ENCODE measurements at regions of chr1 and their contacts with region 1.

Region 1: GRCh38 chr1:1615256-1616044 is at the start of gene MIB2:
- DNase-seq: peak; percentile 98 to 99 (median 99)
- H3K4me3 ChIP-seq: peak within 1 kb of the TSS; percentile 73 to 89
- H3K4me3 Mint-ChIP-seq: peak within 1 kb of the TSS; percentile 89 to 97 (median 94)
- H3K27ac ChIP-seq: peak within 1 kb of the TSS; percentile 100
- H3K27ac Mint-ChIP-seq: peak within 1 kb of the TSS; percentile 98 to 100 (median 99)
- H3K4me1 ChIP-seq: peaks cover 29% of the 10 kb centered on the region
- H3K4me1 Mint-ChIP-seq: peaks cover 10 to 38% (median 26%) of the 10 kb centered on the region in 4 donors
- H3K27me3 ChIP-seq: no peaks in the 10 kb centered on the region
- H3K27me3 Mint-ChIP-seq: no peaks in the 10 kb centered on the region
- total RNA-seq, gene MIB2: 112 to 114 TPM

Region 2: DNA sequence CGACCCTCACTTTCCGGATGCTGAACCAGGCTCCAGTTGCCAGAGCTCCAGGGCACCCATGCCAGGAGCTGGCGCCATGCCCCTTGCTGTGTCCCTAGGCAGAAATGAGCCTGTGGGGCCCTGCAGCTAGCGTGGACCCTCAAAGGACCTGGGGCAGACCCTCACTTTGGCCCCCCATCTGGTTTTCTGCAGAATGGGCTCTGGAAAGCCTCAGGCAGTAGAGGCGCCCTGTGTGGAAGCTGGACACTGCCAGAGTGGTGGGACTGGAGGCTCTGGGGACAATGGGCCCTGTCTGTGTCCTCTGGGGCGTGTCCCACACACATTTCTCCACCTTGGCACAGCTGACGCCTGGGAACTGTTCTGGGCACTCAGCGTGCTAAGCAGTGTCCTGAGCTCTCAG is 234.2 kb before region 1 on chr1:
- CTCF ChIA-PET with region 1: no interaction called
- POLR2A ChIA-PET with region 1: no interaction called
- intact Hi-C with region 1: no loop called
- DNase-seq: no peak
- H3K4me3 ChIP-seq: no peak overlapping the region
- H3K4me3 Mint-ChIP-seq: no peak overlapping the region
- H3K27ac ChIP-seq: no peak overlapping the region
- H3K27ac Mint-ChIP-seq: no peak overlapping the region
- H3K4me1 ChIP-seq: peaks cover under 1% of the 10 kb centered on the region
- H3K4me1 Mint-ChIP-seq: peaks cover 0 to under 1% (median 0%) of the 10 kb centered on the region in 4 donors
- H3K27me3 ChIP-seq: no peaks in the 10 kb centered on the region
- H3K27me3 Mint-ChIP-seq: no peaks in the 10 kb centered on the region

Region 3: DNA sequence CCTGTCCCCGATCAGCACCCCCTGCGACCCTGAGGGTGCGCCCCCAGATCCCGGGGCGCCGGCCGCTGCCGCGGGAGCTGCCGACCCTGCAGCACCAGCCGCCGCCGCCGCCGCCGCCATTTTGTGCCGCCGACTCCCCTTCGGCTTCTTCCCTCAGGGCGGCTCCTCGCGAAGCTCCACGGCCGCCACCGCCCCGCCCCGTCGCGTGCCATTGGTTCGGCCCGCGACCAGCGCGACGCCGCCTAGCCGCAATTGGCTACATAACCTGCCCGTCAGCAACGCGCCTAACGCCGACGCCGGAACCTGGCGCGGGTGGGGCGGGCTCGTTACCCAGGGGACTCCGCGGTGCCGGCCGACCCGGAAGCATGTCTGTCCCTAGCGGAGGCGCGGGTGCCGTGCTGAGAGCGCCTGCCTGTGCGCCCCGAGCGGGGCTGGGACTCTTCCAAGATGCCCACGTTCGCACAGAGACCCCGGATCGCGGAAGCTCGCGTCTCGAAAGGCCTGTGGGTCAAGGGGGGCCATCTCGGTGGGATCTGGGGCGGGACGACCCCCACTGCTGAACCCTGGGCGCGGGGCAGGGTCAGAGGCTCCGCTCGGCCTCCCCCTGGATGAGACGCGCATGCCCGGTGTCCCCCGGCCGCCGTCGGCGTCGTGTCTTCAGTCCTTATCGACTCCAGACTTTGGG is 216.1 kb before region 1 on chr1 and contains the start of gene CCNL2:
- CTCF ChIA-PET with region 1: no interaction called
- POLR2A ChIA-PET with region 1: interaction called, 14 read pairs
- intact Hi-C with region 1: no loop called
- DNase-seq: peak; percentile 98 to 99 (median 99)
- H3K4me3 ChIP-seq: peak within 1 kb of the TSS; percentile 92
- H3K4me3 Mint-ChIP-seq: peak within 1 kb of the TSS; percentile 89 to 94 (median 92)
- H3K27ac ChIP-seq: peak within 1 kb of the TSS; percentile 85
- H3K27ac Mint-ChIP-seq: peak within 1 kb of the TSS; percentile 89 to 96 (median 94)
- H3K4me1 ChIP-seq: peaks cover 36% of the 10 kb centered on the region
- H3K4me1 Mint-ChIP-seq: peaks cover 17 to 63% (median 41%) of the 10 kb centered on the region in 4 donors
- H3K27me3 ChIP-seq: no peaks in the 10 kb centered on the region
- H3K27me3 Mint-ChIP-seq: no peaks in the 10 kb centered on the region
- total RNA-seq, gene CCNL2: 388 to 394 TPM

Region 4: DNA sequence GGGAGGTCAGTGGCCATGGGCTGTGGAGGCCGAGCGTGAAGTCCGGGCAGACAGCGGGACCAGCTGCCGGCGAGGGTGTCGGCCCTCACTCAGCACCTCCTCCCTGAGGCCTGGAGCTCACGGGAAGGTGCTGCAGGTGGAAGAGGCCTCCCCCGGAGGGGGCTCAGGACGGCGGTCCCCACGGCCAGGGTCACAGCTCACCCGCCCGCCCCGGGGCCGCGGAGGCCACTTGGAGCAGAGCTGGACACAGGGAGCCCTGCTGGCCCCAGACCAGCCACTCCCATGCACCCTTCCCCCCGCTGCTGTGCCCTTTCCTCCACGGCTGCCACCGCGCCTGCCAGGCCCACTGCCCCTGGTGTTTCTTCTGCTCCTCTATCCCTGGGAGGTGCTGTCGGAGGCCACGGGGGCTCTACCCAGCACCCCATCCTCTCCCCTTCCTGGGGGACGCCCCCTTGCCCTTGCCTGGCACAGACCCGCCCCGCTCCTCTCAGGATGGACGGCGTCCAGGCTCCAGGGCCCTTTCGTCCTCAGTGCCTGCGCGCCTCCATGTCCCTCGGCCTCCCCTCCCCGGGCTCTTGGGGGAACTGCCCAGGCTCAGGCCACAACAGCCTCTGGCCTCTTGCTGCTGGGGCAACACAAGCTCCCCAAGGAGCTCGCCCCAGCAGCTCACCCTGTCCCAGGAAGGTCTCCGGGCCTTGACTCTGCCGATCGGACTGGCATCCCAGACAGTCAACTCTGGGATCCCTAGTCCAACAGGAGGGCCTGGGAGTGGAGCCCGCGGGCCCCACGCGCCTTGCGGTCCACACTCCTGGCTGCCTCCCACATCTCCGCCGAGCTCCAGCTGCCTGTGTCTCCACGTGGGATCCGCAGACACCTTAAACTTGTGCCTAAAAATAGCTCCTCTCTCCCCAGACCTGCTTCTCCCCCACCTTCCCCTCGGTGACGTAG is 79.2 kb before region 1 on chr1:
- CTCF ChIA-PET with region 1: no interaction called
- POLR2A ChIA-PET with region 1: no interaction called
- intact Hi-C with region 1: no loop called
- DNase-seq: no peak
- H3K4me3 ChIP-seq: no peak overlapping the region
- H3K4me3 Mint-ChIP-seq: no peak overlapping the region
- H3K27ac ChIP-seq: no peak overlapping the region
- H3K27ac Mint-ChIP-seq: peak overlapping the region in 1 of 7 donors; percentile 48
- H3K4me1 ChIP-seq: peaks cover 5% of the 10 kb centered on the region
- H3K4me1 Mint-ChIP-seq: no peaks in the 10 kb centered on the region
- H3K27me3 ChIP-seq: no peaks in the 10 kb centered on the region
- H3K27me3 Mint-ChIP-seq: no peaks in the 10 kb centered on the region

Region 5: DNA sequence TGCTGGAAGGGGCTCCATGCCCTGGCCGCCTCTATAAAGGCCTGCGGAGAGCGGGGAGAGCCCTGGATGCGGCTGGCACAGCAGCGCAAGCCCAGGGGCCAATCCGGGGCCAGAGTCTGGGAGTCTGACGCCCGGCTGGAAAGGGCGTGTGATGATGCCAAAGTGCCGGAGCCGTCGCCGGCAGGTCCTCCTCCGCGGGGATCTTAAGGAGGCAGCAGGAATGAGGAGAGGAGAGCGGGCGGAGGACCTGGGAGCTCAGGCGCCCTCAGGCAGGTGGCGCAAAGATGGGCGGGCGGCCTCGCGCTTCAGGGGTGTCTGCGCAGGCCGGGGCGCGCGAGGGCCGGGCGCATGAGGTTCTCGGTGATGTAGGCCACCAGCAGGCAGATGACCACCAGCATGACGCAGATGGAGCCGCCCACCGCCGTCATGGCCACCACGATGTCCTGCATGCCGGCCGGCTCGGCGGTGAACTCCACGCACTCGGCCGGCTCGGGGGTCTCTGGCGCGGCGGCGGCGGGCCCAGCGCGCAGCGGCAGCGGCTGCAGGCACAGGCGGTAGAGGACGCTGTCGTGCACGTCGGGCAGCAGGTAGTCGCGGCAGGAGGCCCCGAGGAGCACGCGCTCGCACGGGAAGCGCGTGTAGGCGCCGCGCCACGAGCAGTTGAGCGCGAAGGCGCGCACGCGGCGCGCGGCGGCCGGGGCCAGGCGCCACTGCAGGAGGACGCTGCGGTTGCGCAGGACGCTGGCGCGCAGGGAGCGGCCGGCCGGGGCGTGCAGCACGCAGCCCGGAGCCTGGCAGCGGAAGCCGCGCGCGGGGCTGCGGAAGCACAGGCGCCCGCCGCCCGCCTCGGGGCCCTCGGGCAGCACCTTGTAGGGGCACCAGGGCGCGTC is 16.2 kb before region 1 on chr1:
- CTCF ChIA-PET with region 1: interaction called, 3 read pairs
- POLR2A ChIA-PET with region 1: interaction called, 43 read pairs
- intact Hi-C with region 1: loop called (anchors 2 kb)
- DNase-seq: peak in 4 of 5 donors; percentile 41 to 53 (median 50)
- H3K4me3 ChIP-seq: no peak overlapping the region
- H3K4me3 Mint-ChIP-seq: peak overlapping the region; percentile 69 to 85 (median 76)
- H3K27ac ChIP-seq: no peak overlapping the region
- H3K27ac Mint-ChIP-seq: peak overlapping the region in 2 of 7 donors; percentile 46 to 59
- H3K4me1 ChIP-seq: peaks cover 9% of the 10 kb centered on the region
- H3K4me1 Mint-ChIP-seq: peaks cover 0 to 16% (median 1%) of the 10 kb centered on the region in 4 donors
- H3K27me3 ChIP-seq: no peaks in the 10 kb centered on the region
- H3K27me3 Mint-ChIP-seq: peaks cover 0 to 4% of the 10 kb centered on the region in 2 donors

Region 6: DNA sequence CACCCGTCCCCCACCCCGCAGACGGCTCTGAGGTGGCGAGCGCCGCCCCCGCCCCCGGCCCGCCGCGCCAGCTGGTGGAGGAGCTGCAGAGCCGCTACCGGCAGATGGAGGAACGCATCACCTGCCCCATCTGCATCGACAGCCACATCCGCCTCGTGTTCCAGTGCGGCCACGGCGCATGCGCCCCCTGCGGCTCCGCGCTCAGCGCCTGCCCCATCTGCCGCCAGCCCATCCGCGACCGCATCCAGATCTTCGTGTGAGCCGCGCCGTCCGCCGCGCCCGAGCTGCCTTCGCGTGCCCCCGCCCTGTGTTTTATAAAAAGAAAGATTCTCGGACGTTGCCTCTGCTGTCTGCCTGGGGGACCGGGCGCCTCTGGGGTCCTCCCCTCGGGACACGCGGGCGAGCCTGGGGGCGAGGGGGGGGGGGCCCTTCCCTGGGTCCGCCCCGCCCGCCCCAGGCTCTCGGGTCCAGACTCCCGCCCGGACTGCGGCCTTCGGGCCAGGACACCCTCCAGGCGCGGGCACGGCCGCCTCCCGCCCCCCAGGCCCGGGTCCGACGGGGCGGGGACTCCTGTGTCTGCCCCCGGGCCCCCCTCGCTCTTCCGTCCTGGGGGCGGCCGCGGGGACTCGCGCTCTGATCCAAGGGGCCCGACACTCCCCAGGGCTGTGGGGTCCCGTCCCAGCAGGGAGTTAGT is 15.0 kb after region 1 on chr1:
- CTCF ChIA-PET with region 1: interaction called, 5 read pairs
- POLR2A ChIA-PET with region 1: interaction called, 152 read pairs
- intact Hi-C with region 1: loop called (anchors 2 kb)
- DNase-seq: peak; percentile 96 to 98 (median 97)
- H3K4me3 ChIP-seq: peak overlapping the region in 1 of 2 donors; percentile 48
- H3K4me3 Mint-ChIP-seq: peak overlapping the region; percentile 66 to 95 (median 91)
- H3K27ac ChIP-seq: peak overlapping the region; percentile 38
- H3K27ac Mint-ChIP-seq: peak overlapping the region; percentile 93 to 97 (median 96)
- H3K4me1 ChIP-seq: peaks cover 19% of the 10 kb centered on the region
- H3K4me1 Mint-ChIP-seq: peaks cover 3 to 9% (median 6%) of the 10 kb centered on the region in 4 donors
- H3K27me3 ChIP-seq: no peaks in the 10 kb centered on the region
- H3K27me3 Mint-ChIP-seq: peaks cover 2 to 4% of the 10 kb centered on the region in 2 donors

Region 7: DNA sequence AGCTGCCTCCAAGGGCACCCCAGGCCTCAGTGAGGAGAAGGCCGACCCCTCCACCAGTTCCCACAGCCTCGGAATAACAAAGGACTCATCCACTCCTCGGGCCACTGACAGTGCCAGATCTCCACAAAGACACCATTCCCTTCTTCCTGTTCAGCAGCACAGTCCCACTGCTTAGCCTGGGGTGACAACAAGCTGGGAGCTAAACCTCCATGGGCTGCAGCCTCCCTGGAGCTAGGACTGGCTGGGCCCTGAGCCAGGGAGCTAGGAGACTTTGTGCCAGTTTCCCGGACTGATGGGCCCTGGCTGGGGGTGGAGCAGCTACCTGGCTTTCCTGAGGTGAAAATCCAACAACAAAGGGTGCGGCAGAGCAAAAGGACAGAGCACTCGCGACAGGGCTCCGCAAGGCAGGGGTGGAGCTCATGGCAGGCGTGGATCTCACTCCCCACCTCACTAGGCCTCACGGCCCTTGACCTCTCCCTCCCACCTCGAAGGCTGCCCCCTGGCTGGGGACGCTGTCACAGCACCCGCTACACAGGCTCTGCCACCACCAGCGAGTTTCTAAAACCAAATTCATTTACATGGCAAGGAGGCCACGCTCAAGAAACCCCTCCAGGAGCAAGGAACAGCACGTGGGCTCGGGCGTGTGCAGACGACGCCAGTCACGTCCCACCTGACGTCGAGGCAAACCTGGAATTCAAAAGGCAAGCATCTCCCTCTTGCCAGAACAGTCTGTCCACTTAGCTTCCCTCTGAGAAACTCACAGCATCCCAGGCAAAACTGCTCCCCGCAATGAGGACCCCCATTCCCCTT is 63.3 kb after region 1 on chr1:
- CTCF ChIA-PET with region 1: no interaction called
- POLR2A ChIA-PET with region 1: interaction called, 11 read pairs
- intact Hi-C with region 1: no loop called
- DNase-seq: peak in 4 of 5 donors; percentile 25 to 54 (median 48)
- H3K4me3 ChIP-seq: peak overlapping the region in 1 of 2 donors; percentile 63
- H3K4me3 Mint-ChIP-seq: peak overlapping the region; percentile 64 to 96 (median 91)
- H3K27ac ChIP-seq: peak overlapping the region; percentile 61
- H3K27ac Mint-ChIP-seq: peak overlapping the region; percentile 73 to 98 (median 96)
- H3K4me1 ChIP-seq: peaks cover 22% of the 10 kb centered on the region
- H3K4me1 Mint-ChIP-seq: peaks cover 20 to 39% (median 25%) of the 10 kb centered on the region in 4 donors
- H3K27me3 ChIP-seq: no peaks in the 10 kb centered on the region
- H3K27me3 Mint-ChIP-seq: no peaks in the 10 kb centered on the region

Measured in CD4-positive, alpha-beta memory T cell (primary cell).